Left lung (tissue), 14 donors: ENCODE measurements at regions of chr17 and their contacts with region 1.

Region 1: DNA sequence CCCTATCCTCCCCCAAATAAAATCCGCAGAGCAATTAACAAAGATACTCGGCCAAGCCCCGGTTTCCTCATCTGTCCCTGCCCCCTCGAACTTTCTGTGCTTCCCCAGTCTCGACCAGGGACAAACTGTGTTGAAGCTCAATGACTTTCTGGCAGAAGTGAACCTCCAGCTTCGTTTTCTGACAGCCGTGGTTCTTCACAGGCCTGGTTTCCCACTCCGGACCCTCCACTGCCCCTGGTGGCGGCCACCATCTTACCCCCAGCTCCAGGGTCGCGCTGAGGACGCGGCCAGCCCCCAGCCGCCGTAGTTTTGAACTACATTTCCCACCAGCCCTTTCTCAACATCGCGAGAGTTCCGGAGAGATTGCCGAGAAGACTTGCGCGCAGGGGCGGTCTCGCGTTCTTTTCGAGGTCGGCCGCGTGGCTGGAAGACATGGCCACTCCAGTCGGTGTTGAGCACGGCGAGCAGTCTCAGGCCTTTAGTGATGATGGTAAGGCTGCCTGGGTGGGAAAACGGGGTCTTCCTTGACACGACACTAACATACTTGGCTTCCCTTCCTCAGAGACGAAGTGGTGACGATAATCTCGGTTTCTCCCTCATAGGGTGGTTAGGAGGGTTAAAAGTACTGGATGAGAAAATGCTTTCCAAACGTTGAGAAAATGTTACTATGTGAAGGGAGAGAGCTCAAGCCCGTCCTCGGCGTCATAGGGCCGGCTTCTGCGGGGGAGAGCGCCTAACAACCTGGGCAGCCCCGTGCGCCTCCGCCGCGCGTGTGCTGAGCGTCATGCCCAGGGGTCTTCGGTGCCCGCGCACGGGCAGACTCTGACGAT is 17.7 kb downstream of the PRCD start:
- DNase-seq: peak; percentile 95 to 97 (median 96)
- ATAC-seq: peak; percentile 84
- H3K4me3 ChIP-seq: peak overlapping the region; percentile 81 to 88
- H3K27ac ChIP-seq: peak overlapping the region; percentile 95
- H3K4me1 ChIP-seq: peaks cover 46 to 55% of the 10 kb centered on the region in 2 donors
- H3K27me3 ChIP-seq: no peaks in the 10 kb centered on the region
- CTCF ChIP-seq: peak; percentile 30 to 65

Region 2: DNA sequence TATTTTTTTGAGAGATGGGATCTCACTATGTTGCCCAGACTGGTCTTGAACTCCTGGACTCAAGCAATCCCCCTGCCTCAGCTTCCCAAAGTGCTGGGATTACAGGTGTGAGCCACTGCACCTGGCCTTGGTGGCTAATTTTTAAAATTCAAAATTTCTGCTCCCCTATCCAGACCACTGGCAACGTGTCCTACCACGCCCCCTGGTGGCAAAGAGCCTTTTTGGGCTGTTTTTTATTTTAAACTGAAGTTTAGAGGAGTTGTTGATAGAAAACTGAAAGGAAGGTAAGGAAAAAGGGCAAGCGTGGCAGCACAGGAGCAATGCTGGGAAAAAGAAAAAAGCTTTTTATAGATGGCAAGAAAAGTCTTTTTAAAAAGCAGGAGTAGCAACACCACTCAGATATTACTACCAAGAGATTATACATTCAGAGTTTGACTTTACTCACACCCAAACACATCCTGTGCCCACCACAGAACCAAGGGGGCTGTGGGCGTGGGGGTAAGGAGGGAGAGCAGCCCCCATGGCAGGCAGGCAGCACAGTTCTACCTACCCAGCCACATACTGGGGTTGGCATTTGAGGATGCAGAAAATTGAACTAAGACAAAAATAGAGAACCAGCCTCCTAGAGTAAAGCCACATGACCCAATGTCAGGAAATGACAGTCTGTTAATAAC is 157.4 kb after region 1 on chr17:
- intact Hi-C with region 1: loop called in 1 of 2 experiments (anchors 10 kb)
- DNase-seq: no peak
- ATAC-seq: peak; percentile 14
- H3K4me3 ChIP-seq: no peak overlapping the region
- H3K27ac ChIP-seq: peak overlapping the region; percentile 75 to 95
- H3K4me1 ChIP-seq: peaks cover 29 to 60% of the 10 kb centered on the region in 2 donors
- H3K27me3 ChIP-seq: peaks cover 0 to 5% of the 10 kb centered on the region in 2 donors
- CTCF ChIP-seq: peak; percentile 66 to 83

Region 3: GRCh38 chr17:76737082-76737675 is 179.6 kb after region 1 on chr17 and contains the start of gene SRSF2:
- intact Hi-C with region 1: no loop called
- DNase-seq: peak; percentile 98 to 99 (median 98)
- ATAC-seq: peak; percentile 88
- H3K4me3 ChIP-seq: peak within 1 kb of the TSS; percentile 97 to 98
- H3K27ac ChIP-seq: peak within 1 kb of the TSS; percentile 99
- H3K4me1 ChIP-seq: peaks cover 22 to 63% of the 10 kb centered on the region in 2 donors
- H3K27me3 ChIP-seq: no peaks in the 10 kb centered on the region
- CTCF ChIP-seq: no peak
- polyA plus RNA-seq, gene SRSF2: 324 to 393 (median 362) TPM